Caco-2 (cell line): ENCODE measurements at regions of chr6 and their contacts with region 1.

Region 1: DNA sequence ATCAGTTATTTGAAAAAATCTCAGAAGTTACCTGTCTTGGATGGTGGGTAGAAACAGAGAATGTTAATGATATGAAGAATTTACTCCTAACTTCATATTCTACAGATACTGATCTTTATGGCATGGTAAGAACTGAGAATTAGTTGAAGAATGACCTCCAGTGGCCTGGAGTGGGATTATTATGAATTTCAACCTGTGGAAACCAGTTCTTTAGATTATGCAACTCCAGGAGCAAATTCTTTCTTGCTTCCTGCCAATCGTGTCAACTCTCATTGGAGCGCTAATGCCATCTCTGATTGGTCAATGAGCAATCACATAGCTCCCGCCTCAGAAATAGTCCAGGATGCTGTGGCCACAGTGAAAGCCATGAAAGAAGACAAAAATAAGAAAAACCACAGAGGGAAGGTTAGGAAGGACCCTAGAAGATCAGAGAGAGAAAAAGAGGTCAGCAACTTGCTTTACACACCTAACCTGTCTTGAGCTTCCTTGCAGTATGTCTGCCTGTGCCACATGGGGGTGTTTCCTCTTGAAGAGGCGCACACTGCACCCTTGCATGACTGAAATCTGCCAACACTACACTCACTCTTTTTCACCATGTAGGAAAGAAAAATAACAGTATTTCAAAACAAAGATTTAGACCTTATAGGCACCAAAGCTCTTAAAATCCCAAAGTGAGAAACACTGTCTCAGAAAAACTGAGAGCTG is 40.4 kb downstream of the LYRM2 start:
- DNase-seq: peak; percentile 63 to 78
- H3K4me3 ChIP-seq: no peak overlapping the region
- H3K4me3 Mint-ChIP-seq: peak overlapping the region; percentile 64
- H3K27ac Mint-ChIP-seq: peak overlapping the region; percentile 45
- H3K4me1 ChIP-seq: peaks cover 4% of the 10 kb centered on the region; the same call in 1 of the 2 replicates
- H3K4me1 Mint-ChIP-seq: peaks cover 6% of the 10 kb centered on the region
- H3K27me3 ChIP-seq: no peaks in the 10 kb centered on the region
- H3K27me3 Mint-ChIP-seq: no peaks in the 10 kb centered on the region
- CTCF ChIP-seq: peak in 1 of 2 experiments; percentile 31

Region 2: GRCh38 chr6:89432875-89433251 is 165.3 kb before region 1 on chr6 and contains the start of gene ANKRD6:
- CTCF ChIA-PET with region 1: interaction called, 14 read pairs
- POLR2A ChIA-PET with region 1: no interaction called
- intact Hi-C with region 1: loop called (anchors 1 kb)
- DNase-seq: peak; percentile 50 to 91
- H3K4me3 ChIP-seq: peak within 1 kb of the TSS; percentile 59
- H3K4me3 Mint-ChIP-seq: peak within 1 kb of the TSS; percentile 65
- H3K27ac Mint-ChIP-seq: no peak within 1 kb of the TSS
- H3K4me1 ChIP-seq: peaks cover under 1% of the 10 kb centered on the region; the same call in 1 of the 2 replicates
- H3K4me1 Mint-ChIP-seq: peaks cover 6% of the 10 kb centered on the region
- H3K27me3 ChIP-seq: no peaks in the 10 kb centered on the region
- H3K27me3 Mint-ChIP-seq: peaks cover 13% of the 10 kb centered on the region
- CTCF ChIP-seq: peak; percentile 72 to 83
- total RNA-seq, gene ANKRD6: 20.5 and 25.6 TPM in 2 replicates

Region 3: GRCh38 chr6:89501249-89501621 is 96.9 kb before region 1 on chr6:
- CTCF ChIA-PET with region 1: interaction called, 5 read pairs
- POLR2A ChIA-PET with region 1: no interaction called
- intact Hi-C with region 1: loop called (anchors 5 kb)
- DNase-seq: peak in 1 of 2 experiments; percentile 25
- H3K4me3 ChIP-seq: no peak overlapping the region
- H3K4me3 Mint-ChIP-seq: peak overlapping the region; percentile 51
- H3K27ac Mint-ChIP-seq: peak overlapping the region; percentile 69
- H3K4me1 ChIP-seq: peaks cover 43% of the 10 kb centered on the region
- H3K4me1 Mint-ChIP-seq: peaks cover 24% of the 10 kb centered on the region
- H3K27me3 ChIP-seq: no peaks in the 10 kb centered on the region
- H3K27me3 Mint-ChIP-seq: no peaks in the 10 kb centered on the region
- CTCF ChIP-seq: no peak

Region 4: GRCh38 chr6:89527634-89528033 is 70.5 kb before region 1 on chr6:
- CTCF ChIA-PET with region 1: no interaction called
- POLR2A ChIA-PET with region 1: no interaction called
- intact Hi-C with region 1: loop called (anchors 5 kb)
- DNase-seq: no peak
- H3K4me3 ChIP-seq: no peak overlapping the region
- H3K4me3 Mint-ChIP-seq: no peak overlapping the region
- H3K27ac Mint-ChIP-seq: no peak overlapping the region
- H3K4me1 ChIP-seq: no peaks in the 10 kb centered on the region
- H3K4me1 Mint-ChIP-seq: no peaks in the 10 kb centered on the region
- H3K27me3 ChIP-seq: no peaks in the 10 kb centered on the region
- H3K27me3 Mint-ChIP-seq: no peaks in the 10 kb centered on the region
- CTCF ChIP-seq: no peak

Region 5: DNA sequence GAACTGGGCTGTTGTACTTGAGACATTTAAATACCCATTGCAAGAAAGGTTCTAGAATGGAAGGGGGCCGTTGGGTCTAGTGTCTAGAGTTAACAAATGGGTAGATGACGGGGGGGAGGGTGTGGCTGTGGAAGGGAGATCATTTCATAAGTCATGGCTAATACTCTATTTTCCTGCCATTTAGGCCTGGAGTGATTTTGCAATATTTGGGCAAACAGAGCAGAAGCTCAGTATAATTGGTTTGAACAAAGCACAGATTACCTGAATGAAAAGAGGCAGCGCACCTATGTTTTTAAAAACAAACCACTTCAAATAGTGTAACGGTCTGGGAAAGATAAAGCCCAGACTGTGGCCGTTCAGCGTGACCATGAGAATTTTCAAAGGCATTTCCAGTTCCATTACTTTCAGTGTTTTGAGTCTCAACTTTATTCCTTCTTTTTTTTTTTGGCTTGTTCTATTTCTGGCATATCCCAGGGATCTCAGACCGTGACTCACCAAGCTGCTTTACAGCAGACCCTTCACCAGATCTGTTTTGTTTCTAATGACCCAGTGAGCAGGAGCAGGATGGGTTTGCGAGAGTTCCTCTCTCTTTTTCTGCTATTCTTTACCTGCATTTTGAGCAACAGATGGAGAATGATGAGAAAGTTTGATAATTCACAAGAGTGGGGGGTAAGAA is 33.2 kb before region 1 on chr6:
- CTCF ChIA-PET with region 1: interaction called, 5 read pairs
- POLR2A ChIA-PET with region 1: no interaction called
- intact Hi-C with region 1: loop called (anchors 1 kb)
- DNase-seq: peak in 1 of 2 experiments; percentile 38
- H3K4me3 ChIP-seq: no peak overlapping the region
- H3K4me3 Mint-ChIP-seq: no peak overlapping the region
- H3K27ac Mint-ChIP-seq: no peak overlapping the region
- H3K4me1 ChIP-seq: peaks cover 18% of the 10 kb centered on the region
- H3K4me1 Mint-ChIP-seq: peaks cover 21% of the 10 kb centered on the region
- H3K27me3 ChIP-seq: no peaks in the 10 kb centered on the region
- H3K27me3 Mint-ChIP-seq: no peaks in the 10 kb centered on the region
- CTCF ChIP-seq: no peak

Region 6: GRCh38 chr6:89574910-89575561 is 23.1 kb before region 1 on chr6:
- CTCF ChIA-PET with region 1: no interaction called
- POLR2A ChIA-PET with region 1: no interaction called
- intact Hi-C with region 1: loop called (anchors 2 kb)
- DNase-seq: peak; percentile 63 to 72
- H3K4me3 ChIP-seq: no peak overlapping the region
- H3K4me3 Mint-ChIP-seq: peak overlapping the region; percentile 61
- H3K27ac Mint-ChIP-seq: peak overlapping the region; percentile 85
- H3K4me1 ChIP-seq: peaks cover 21% of the 10 kb centered on the region
- H3K4me1 Mint-ChIP-seq: peaks cover 15% of the 10 kb centered on the region
- H3K27me3 ChIP-seq: no peaks in the 10 kb centered on the region
- H3K27me3 Mint-ChIP-seq: no peaks in the 10 kb centered on the region
- CTCF ChIP-seq: no peak

Region 7: GRCh38 chr6:90110971-90111370 is 512.8 kb after region 1 on chr6:
- CTCF ChIA-PET with region 1: no interaction called
- POLR2A ChIA-PET with region 1: no interaction called
- intact Hi-C with region 1: no loop called
- DNase-seq: no peak
- H3K4me3 ChIP-seq: no peak overlapping the region
- H3K4me3 Mint-ChIP-seq: no peak overlapping the region
- H3K27ac Mint-ChIP-seq: no peak overlapping the region
- H3K4me1 ChIP-seq: no peaks in the 10 kb centered on the region
- H3K4me1 Mint-ChIP-seq: no peaks in the 10 kb centered on the region
- H3K27me3 ChIP-seq: no peaks in the 10 kb centered on the region
- H3K27me3 Mint-ChIP-seq: peaks cover 10% of the 10 kb centered on the region
- CTCF ChIP-seq: no peak